Activated B cell treated with CpG ODN at 0.5 μM for 24 hours (primary cell): ENCODE measurements at regions of chr12 and their contacts with region 1.

Region 1: GRCh38 chr12:92445253-92446082 is 257.3 kb upstream of the PLEKHG7 start:
- DNase-seq: peak; percentile 55
- ATAC-seq: peak; percentile 71
- H3K4me3 Mint-ChIP-seq: peak overlapping the region; percentile 67
- H3K27ac Mint-ChIP-seq: peak overlapping the region; percentile 97
- H3K4me1 Mint-ChIP-seq: peaks cover 95% of the 10 kb centered on the region
- H3K27me3 Mint-ChIP-seq: no peaks in the 10 kb centered on the region
- CTCF ChIP-seq: no peak

Region 2: GRCh38 chr12:92170050-92170449 is 275.4 kb before region 1 on chr12:
- CTCF ChIA-PET with region 1: interaction called, 5 read pairs
- POLR2A ChIA-PET with region 1: interaction called, 88 read pairs
- intact Hi-C with region 1: loop called (anchors 1 kb)
- DNase-seq: no peak
- ATAC-seq: no peak
- H3K4me3 Mint-ChIP-seq: peak overlapping the region; percentile 6
- H3K27ac Mint-ChIP-seq: peak overlapping the region; percentile 74
- H3K4me1 Mint-ChIP-seq: peaks cover 72% of the 10 kb centered on the region
- H3K27me3 Mint-ChIP-seq: no peaks in the 10 kb centered on the region
- CTCF ChIP-seq: no peak

Region 3: GRCh38 chr12:92396647-92397252 is 48.7 kb before region 1 on chr12:
- CTCF ChIA-PET with region 1: no interaction called
- POLR2A ChIA-PET with region 1: interaction called, 77 read pairs
- intact Hi-C with region 1: no loop called
- DNase-seq: no peak
- ATAC-seq: no peak
- H3K4me3 Mint-ChIP-seq: no peak overlapping the region
- H3K27ac Mint-ChIP-seq: peak overlapping the region; percentile 93
- H3K4me1 Mint-ChIP-seq: peaks cover 70% of the 10 kb centered on the region
- H3K27me3 Mint-ChIP-seq: no peaks in the 10 kb centered on the region
- CTCF ChIP-seq: no peak

Region 4: GRCh38 chr12:92466391-92467305 is 21.2 kb after region 1 on chr12:
- CTCF ChIA-PET with region 1: interaction called, 13 read pairs
- POLR2A ChIA-PET with region 1: interaction called, 269 read pairs
- intact Hi-C with region 1: loop called (anchors 1 kb)
- DNase-seq: peak; percentile 51
- ATAC-seq: peak; percentile 74
- H3K4me3 Mint-ChIP-seq: peak overlapping the region; percentile 93
- H3K27ac Mint-ChIP-seq: peak overlapping the region; percentile 99
- H3K4me1 Mint-ChIP-seq: peaks cover 94% of the 10 kb centered on the region
- H3K27me3 Mint-ChIP-seq: no peaks in the 10 kb centered on the region
- CTCF ChIP-seq: no peak

Region 5: DNA sequence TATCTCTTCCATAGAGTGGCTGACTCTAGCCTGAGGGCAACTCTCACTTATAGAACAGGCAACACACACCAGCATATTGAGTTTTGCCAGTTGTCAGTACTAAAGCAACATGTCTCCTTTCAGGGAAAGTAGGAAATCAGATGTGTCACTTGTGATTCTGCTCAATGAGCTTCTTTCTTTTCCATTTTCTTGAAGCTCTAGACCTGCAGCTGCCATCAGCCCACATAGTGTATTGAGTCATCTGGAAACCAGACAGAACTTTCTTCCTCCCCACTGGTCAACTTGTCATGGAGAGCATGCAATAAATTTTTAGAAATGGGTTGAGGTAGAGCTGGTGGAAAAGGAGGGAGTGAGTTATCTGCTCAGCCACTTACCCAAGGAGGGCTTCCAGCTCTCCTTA is 48.3 kb after region 1 on chr12:
- CTCF ChIA-PET with region 1: interaction called, 3 read pairs
- POLR2A ChIA-PET with region 1: interaction called, 16 read pairs
- intact Hi-C with region 1: no loop called
- DNase-seq: no peak
- ATAC-seq: peak; percentile 33
- H3K4me3 Mint-ChIP-seq: no peak overlapping the region
- H3K27ac Mint-ChIP-seq: peak overlapping the region; percentile 80
- H3K4me1 Mint-ChIP-seq: peaks cover 75% of the 10 kb centered on the region
- H3K27me3 Mint-ChIP-seq: no peaks in the 10 kb centered on the region
- CTCF ChIP-seq: no peak

Region 6: DNA sequence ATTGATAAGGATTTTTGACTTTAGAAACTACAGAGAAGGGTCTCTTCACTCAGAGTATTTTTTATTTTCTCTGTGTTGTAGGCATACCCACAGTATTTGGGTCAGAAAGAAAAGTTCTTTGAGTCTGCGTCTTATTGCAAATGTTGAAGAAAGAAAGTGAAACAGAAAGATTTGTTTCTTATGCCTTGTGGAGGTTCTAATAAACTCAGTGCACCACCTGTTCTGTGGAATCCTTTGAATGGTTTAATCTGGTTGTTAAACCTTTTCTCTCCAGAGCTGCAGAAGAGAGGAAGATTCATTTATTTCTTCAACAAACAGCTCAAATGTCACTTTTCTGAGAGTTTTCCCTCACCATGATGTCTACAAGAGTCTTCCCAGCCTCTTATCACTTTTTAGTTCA is 110.7 kb after region 1 on chr12:
- CTCF ChIA-PET with region 1: no interaction called
- POLR2A ChIA-PET with region 1: interaction called, 8 read pairs
- intact Hi-C with region 1: loop called (anchors 1 kb)
- DNase-seq: no peak
- ATAC-seq: peak; percentile 33
- H3K4me3 Mint-ChIP-seq: peak overlapping the region; percentile 69
- H3K27ac Mint-ChIP-seq: peak overlapping the region; percentile 90
- H3K4me1 Mint-ChIP-seq: peaks cover 64% of the 10 kb centered on the region
- H3K27me3 Mint-ChIP-seq: no peaks in the 10 kb centered on the region
- CTCF ChIP-seq: no peak